IMR-90 (cell line): ENCODE measurements at regions of chr16 and their contacts with region 1.

Region 1: GRCh38 chr16:75234856-75235696 is 16.3 kb downstream of the CTRB1 start:
- DNase-seq: no peak
- ATAC-seq: no peak
- H3K4me3 ChIP-seq: no peak overlapping the region
- H3K27ac ChIP-seq: no peak overlapping the region
- H3K4me1 ChIP-seq: peaks cover 32% of the 10 kb centered on the region
- H3K27me3 ChIP-seq: no peaks in the 10 kb centered on the region
- CTCF ChIP-seq: no peak
- POLR2A ChIP-seq: no peak
- RAD21 ChIP-seq: no peak

Region 2: GRCh38 chr16:75251280-75252048 is 16.4 kb after region 1 on chr16 and contains the start of gene BCAR1:
- CTCF ChIA-PET with region 1: interaction called, 4 read pairs
- POLR2A ChIA-PET with region 1: interaction called, 21 read pairs
- dilution Hi-C with region 1: no loop called
- in situ Hi-C with region 1: no loop called
- intact Hi-C with region 1: no loop called
- DNase-seq: peak; percentile 93
- ATAC-seq: peak; percentile 68
- H3K4me3 ChIP-seq: peak within 1 kb of the TSS; percentile 70
- H3K27ac ChIP-seq: peak within 1 kb of the TSS; percentile 98
- H3K4me1 ChIP-seq: peaks cover 76% of the 10 kb centered on the region
- H3K27me3 ChIP-seq: no peaks in the 10 kb centered on the region
- CTCF ChIP-seq: no peak
- POLR2A ChIP-seq: peak; percentile 81
- RAD21 ChIP-seq: peak; percentile 15; the same call in 1 of the 2 replicates
- total RNA-seq, gene BCAR1: 17.8 and 18.1 TPM in 2 replicates

Region 3: GRCh38 chr16:75271441-75272096 is 36.5 kb after region 1 on chr16:
- CTCF ChIA-PET with region 1: no interaction called
- POLR2A ChIA-PET with region 1: no interaction called
- dilution Hi-C with region 1: no loop called
- in situ Hi-C with region 1: no loop called
- intact Hi-C with region 1: loop called (anchors 1 kb)
- DNase-seq: no peak
- ATAC-seq: no peak
- H3K4me3 ChIP-seq: no peak overlapping the region
- H3K27ac ChIP-seq: no peak overlapping the region
- H3K4me1 ChIP-seq: peaks cover 14% of the 10 kb centered on the region
- H3K27me3 ChIP-seq: no peaks in the 10 kb centered on the region
- CTCF ChIP-seq: no peak
- POLR2A ChIP-seq: no peak
- RAD21 ChIP-seq: no peak

Region 4: DNA sequence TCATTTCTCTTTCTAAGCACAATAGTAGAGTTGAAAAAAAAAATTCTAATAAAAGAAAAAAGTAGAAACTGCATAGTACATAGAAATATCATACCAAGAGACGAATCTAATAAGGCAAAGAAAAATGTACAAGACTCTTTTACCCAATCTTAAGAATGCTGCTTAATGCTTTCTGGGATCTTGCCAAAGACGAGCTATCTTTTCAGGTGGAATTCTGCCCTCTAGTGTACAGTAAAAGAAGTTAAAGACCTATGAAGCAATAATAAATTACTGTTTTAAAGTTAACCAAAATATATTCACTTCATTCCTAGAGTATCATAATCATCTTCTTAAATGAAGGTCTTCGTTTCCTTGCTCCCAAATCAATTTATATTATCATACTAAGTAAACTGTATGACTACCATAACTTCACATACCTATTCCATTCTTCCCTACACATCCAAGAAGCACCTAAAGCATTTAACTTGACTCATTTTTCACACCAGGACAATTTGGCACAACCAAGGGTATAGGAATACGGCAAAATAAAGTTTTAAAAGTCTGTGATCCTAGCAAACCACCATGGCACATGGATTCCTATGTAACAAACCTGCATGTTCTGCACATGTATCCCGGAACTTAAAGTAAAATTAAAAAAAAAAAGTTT is 150.6 kb after region 1 on chr16:
- CTCF ChIA-PET with region 1: interaction called, 7 read pairs
- POLR2A ChIA-PET with region 1: no interaction called
- dilution Hi-C with region 1: no loop called
- in situ Hi-C with region 1: loop called (anchors 5 kb)
- intact Hi-C with region 1: loop called (anchors 1 kb)
- DNase-seq: peak; percentile 88
- ATAC-seq: peak; percentile 33
- H3K4me3 ChIP-seq: no peak overlapping the region
- H3K27ac ChIP-seq: no peak overlapping the region
- H3K4me1 ChIP-seq: peaks cover 21% of the 10 kb centered on the region
- H3K27me3 ChIP-seq: no peaks in the 10 kb centered on the region
- CTCF ChIP-seq: peak; percentile 74
- POLR2A ChIP-seq: no peak
- RAD21 ChIP-seq: peak; percentile 85

Region 5: DNA sequence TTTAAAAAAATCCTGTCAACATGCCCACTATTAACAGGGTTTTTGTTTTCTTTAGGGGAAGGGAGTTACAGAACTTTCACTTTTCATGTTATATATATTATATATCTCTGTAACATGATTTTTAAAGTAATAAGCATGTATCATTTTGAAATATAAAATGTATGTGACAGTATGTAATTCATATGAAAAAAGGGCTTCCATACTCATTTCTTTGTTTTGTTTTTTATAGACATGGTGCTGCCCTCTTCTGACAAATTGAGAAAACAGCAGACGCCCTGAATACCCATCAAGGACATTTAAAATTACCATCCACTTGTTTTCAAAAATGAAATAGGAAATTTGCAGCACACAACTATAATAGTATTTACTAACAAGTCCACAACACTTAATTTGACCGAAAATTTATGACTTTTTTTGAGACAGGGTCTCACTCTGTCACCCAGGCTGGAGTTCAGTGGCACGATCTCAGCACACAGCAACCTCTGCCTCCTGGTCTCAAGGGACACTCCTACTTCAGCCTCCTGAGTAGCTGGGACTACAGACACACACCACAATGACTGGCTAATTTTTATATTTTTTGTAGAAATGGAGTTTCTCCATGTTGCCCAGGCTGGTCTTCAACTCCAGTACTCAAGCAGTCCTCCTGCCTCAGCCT is 167.9 kb after region 1 on chr16:
- CTCF ChIA-PET with region 1: interaction called, 3 read pairs
- POLR2A ChIA-PET with region 1: no interaction called
- dilution Hi-C with region 1: no loop called
- in situ Hi-C with region 1: no loop called
- intact Hi-C with region 1: loop called (anchors 5 kb)
- DNase-seq: peak; percentile 60
- ATAC-seq: peak; percentile 81
- H3K4me3 ChIP-seq: no peak overlapping the region
- H3K27ac ChIP-seq: no peak overlapping the region
- H3K4me1 ChIP-seq: peaks cover 4% of the 10 kb centered on the region; the same call in 1 of the 2 replicates
- H3K27me3 ChIP-seq: no peaks in the 10 kb centered on the region
- CTCF ChIP-seq: peak; percentile 72
- POLR2A ChIP-seq: no peak
- RAD21 ChIP-seq: peak; percentile 65